Activated T-helper 1 cell treated with anti-CD3 and anti-CD28 coated beads, Interleukin-12 subunit alpha, Interleukin-12 subunit beta, Interleukin-2, Interleukin-4 antibody, amounts not matched to agents 30 ng/mL and 10 ng/mL and 1 ng/mL, durations not matched to agents 14 hours and 24 hours and 36 hours (primary cell): ENCODE measurements at regions of chr1 and their contacts with region 1.

Region 1: GRCh38 chr1:6245086-6245868 is 1.3 kb downstream of the HES3 start:
- DNase-seq: peak; percentile 77
- H3K4me3 Mint-ChIP-seq: no peak overlapping the region
- H3K27ac Mint-ChIP-seq: no peak overlapping the region
- H3K4me1 Mint-ChIP-seq: peaks cover 11% of the 10 kb centered on the region
- H3K27me3 Mint-ChIP-seq: peaks cover 55% of the 10 kb centered on the region

Region 2: GRCh38 chr1:6108937-6109614 is 136.2 kb before region 1 on chr1:
- intact Hi-C with region 1: loop called (anchors 1 kb)
- DNase-seq: peak; percentile 25
- H3K4me3 Mint-ChIP-seq: no peak overlapping the region
- H3K27ac Mint-ChIP-seq: no peak overlapping the region
- H3K4me1 Mint-ChIP-seq: no peaks in the 10 kb centered on the region
- H3K27me3 Mint-ChIP-seq: peaks cover 8% of the 10 kb centered on the region

Region 3: DNA sequence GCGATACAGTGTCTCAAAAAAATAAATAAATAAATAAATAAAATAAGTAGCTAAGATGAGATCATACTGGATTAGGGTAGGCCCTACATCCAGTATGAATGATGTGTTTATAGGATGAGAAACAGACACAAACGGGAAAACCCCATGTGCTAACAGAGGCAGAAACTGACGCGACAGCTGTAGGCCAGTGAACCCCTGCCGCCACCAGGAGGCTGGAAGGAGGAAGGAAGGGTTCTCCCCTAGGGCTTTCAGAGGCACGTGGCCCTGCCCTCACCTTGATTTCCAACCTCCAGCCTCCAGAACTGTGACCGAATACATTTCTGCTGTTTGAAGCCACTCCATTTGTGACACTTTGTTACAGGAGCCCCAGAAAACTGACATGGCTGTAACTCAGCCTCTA is 103.7 kb before region 1 on chr1:
- intact Hi-C with region 1: no loop called
- DNase-seq: no peak
- H3K4me3 Mint-ChIP-seq: no peak overlapping the region
- H3K27ac Mint-ChIP-seq: no peak overlapping the region
- H3K4me1 Mint-ChIP-seq: peaks cover 4% of the 10 kb centered on the region
- H3K27me3 Mint-ChIP-seq: peaks cover 1% of the 10 kb centered on the region

Region 4: DNA sequence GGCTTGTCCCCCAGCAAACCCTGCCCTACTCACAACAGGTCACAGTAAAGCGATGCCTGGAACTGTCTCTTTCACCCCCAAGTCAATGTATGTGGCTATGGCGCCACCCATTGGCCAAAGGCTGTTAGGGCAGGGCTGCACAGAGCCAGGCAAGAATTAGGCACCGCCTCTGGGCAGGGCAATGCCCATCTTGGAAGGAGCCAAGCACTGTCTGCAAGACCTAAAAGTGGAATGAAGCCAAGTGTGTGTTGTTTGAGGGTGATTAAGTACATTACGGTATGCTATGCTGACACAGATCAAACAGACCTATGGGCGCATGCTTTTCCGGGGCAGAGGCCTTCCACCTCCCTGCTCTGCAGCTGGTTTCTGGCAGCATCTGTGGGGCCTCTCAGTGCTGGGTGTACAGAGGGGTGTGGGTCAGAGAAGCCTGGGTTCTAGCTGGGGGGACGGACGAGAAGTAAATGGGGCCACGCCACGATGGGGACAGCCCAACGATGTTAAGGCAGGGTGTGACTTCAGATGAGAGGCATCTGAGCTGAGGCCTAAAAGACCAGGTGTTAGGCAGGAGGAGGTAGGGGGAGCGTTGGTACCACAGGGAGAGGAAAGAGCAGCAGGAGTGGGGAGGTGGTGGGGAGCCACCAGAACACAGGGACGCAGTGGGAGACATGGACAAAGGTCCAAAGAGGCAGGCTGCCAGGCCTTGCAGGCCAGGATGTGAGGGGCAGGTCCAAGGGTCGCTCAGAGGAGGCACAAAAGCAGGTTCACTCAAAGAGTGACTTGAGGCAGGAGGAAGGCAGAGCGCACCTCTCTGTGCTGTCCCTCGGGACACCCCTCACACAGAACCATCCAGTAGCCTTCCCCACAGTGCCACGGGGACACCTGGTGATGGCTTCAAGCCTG is 98.5 kb after region 1 on chr1:
- intact Hi-C with region 1: loop called (anchors 1 kb)
- DNase-seq: peak; percentile 58
- H3K4me3 Mint-ChIP-seq: no peak overlapping the region
- H3K27ac Mint-ChIP-seq: no peak overlapping the region
- H3K4me1 Mint-ChIP-seq: peaks cover 18% of the 10 kb centered on the region
- H3K27me3 Mint-ChIP-seq: peaks cover 1% of the 10 kb centered on the region

Region 5: DNA sequence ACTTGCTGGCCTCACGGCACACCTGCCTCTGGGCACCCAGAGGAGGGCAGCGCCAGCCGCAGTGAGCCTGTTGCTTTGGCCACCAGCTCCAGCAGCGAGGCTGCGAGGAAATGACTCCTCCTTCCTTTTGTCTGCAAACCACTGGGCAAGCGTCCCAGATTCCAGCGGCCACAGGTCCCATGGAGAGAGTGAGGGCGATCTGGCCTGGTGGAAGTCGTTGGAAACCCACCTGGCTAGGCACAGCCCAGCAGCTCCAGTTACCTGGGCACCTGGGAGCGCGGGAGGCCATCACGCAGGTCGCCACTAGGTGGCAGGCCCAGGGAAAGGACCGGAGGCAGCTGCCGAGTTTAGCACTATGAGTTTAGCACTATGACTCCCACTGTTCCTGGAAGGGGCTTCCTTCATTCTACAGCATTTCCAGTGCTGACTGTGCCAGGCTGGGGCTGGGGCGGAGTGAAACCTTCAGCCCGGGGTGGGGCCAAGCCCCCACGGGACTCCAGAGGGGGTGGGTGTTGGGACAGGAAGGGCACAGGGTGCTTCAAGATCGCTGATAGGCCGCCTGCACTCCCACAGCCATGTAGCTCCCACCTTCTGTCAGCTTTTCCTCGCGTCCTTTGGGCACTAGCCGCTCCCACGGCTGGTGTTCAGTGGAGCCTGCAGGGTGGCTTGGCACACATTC is 178.2 kb after region 1 on chr1:
- intact Hi-C with region 1: loop called (anchors 5 kb)
- DNase-seq: peak; percentile 56
- H3K4me3 Mint-ChIP-seq: peak overlapping the region; percentile 42
- H3K27ac Mint-ChIP-seq: no peak overlapping the region
- H3K4me1 Mint-ChIP-seq: peaks cover 14% of the 10 kb centered on the region
- H3K27me3 Mint-ChIP-seq: peaks cover 54% of the 10 kb centered on the region

Region 6: GRCh38 chr1:6464514-6464836 is 219.2 kb after region 1 on chr1:
- intact Hi-C with region 1: loop called (anchors 5 kb)
- DNase-seq: no peak
- H3K4me3 Mint-ChIP-seq: peak overlapping the region; percentile 99
- H3K27ac Mint-ChIP-seq: peak overlapping the region; percentile 91
- H3K4me1 Mint-ChIP-seq: peaks cover 41% of the 10 kb centered on the region
- H3K27me3 Mint-ChIP-seq: no peaks in the 10 kb centered on the region